Right cardiac atrium (tissue), 5 donors: ENCODE measurements at regions of chr5 and their contacts with region 1.

Region 1: GRCh38 chr5:141557681-141558136 is 61.1 kb downstream of the DIAPH1 start:
- DNase-seq: peak; percentile 85 to 92 (median 90)
- ATAC-seq: peak; percentile 88 to 91
- H3K4me3 ChIP-seq: peak overlapping the region; percentile 30
- H3K27ac ChIP-seq: peak overlapping the region; percentile 86
- H3K4me1 ChIP-seq: peaks cover 4% of the 10 kb centered on the region
- H3K27me3 ChIP-seq: no peaks in the 10 kb centered on the region

Region 2: DNA sequence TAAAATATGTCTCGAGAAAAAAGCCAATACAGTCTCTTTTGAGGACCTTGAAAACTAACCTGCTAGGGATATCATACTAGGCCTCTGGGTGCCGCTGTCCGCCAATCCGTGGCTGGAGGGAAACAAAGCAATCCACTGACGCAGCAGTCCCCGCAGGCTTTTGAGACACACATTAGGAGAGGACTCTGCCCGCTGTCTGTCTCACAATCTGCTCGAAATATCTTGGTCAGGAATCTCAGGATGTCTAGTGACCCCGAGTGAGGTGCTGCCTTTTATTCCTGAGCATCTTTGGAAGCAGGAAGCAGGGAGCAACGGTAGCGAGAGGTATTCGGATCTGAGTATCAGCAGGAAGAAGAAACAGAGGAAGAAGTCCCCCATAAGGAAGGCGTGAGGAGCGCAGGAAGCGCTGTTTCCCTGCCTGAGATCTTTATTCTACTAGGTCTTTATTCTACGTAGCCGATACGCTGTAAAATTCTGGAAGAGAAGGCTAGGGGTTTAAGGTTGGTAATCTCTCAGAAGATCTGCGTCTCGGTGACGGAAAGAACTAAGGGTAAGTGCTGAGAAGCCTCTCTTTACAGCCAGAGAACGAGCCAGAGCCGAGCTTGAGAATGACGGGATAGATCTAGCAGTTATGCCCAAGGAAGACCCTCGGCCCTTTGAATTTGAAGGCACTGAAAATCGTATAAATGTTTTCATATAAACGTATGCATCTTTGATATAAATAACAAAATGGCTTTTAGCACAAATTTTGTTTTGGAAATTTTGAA is 231.4 kb before region 1 on chr5:
- intact Hi-C with region 1: loop called in 2 of 4 experiments (anchors 5 to 10 kb)
- DNase-seq: peak; percentile 59 to 83 (median 77)
- ATAC-seq: peak; percentile 77 to 93
- H3K4me3 ChIP-seq: peak overlapping the region; percentile 46
- H3K27ac ChIP-seq: peak overlapping the region; percentile 55
- H3K4me1 ChIP-seq: no peaks in the 10 kb centered on the region
- H3K27me3 ChIP-seq: no peaks in the 10 kb centered on the region

Region 3: DNA sequence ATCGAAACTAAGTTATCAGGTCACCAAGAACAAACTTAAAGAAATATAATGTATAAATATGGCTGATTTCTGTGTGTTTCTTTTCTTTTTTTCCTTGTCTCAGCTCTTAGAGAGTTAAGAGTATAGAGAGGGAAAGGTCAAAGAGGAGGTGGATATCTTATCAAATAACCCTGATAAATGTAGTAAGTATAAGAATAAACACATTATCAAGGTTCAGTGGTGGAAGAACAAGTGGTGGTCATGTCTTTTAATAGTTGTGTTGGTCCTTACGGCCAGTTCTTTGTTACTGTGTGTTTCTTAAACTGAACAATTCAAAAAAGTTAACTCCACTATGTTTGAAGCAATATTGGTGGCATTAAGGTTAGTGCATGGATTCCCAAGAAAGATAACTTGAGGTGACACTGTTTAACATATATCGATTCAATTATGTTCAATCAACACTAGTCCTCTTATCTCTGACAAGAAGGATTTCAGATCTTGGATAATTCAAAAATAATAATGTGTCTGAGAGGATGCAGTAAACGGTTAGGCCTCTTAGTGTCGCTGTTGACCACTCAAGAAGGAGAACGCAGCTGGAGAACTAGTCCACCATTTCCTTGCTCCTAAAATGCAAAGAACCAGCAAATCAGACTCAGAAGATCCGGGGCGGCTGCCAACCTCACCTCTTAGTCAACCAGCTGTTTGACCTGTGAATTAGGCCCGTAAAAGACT is 214.3 kb before region 1 on chr5 and contains the start of gene PCDHGA3:
- intact Hi-C with region 1: loop called in 3 of 4 experiments (anchors 5 to 10 kb)
- DNase-seq: no peak
- ATAC-seq: peak; percentile 40 to 47
- H3K4me3 ChIP-seq: peak within 1 kb of the TSS; percentile 42
- H3K27ac ChIP-seq: no peak within 1 kb of the TSS
- H3K4me1 ChIP-seq: no peaks in the 10 kb centered on the region
- H3K27me3 ChIP-seq: no peaks in the 10 kb centered on the region
- total RNA-seq, gene PCDHGA3: 4.9 to 7.7 (median 5.6) TPM

Region 4: DNA sequence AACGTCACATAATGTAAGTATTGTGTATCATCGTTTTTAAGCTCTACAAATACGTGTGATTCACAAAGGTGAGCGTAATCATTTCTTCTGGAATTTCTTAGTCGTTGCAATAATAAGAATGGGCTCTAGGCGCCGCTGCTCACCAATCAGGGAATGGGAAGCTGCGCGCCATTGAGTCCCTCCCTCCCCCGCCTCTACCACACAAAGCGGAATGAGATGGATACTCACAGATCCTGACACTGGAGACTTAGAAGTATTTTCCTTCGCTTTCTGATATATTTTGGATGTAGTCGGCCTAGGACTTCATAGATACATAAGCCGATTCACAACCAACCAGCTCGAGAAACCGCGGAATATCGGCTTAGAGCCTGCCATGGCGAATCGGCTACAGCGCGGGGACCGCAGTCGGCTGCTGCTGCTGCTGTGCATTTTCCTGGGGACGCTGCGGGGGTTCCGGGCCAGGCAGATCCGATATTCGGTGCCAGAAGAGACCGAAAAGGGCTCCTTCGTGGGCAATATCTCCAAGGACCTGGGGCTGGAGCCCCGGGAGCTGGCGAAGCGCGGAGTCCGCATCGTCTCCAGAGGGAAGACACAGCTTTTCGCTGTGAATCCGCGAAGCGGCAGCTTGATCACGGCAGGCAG is 136.7 kb before region 1 on chr5 and contains the start of gene PCDHGA11:
- intact Hi-C with region 1: loop called in 2 of 4 experiments (anchors 5 kb)
- DNase-seq: peak in 1 of 3 donors; percentile 56
- ATAC-seq: peak in 1 of 2 donors; percentile 39
- H3K4me3 ChIP-seq: peak within 1 kb of the TSS; percentile 49
- H3K27ac ChIP-seq: no peak within 1 kb of the TSS
- H3K4me1 ChIP-seq: peaks cover 2% of the 10 kb centered on the region
- H3K27me3 ChIP-seq: no peaks in the 10 kb centered on the region
- total RNA-seq, gene PCDHGA11: 3.1 to 4.2 (median 3.6) TPM

Region 5: GRCh38 chr5:141430332-141431113 is 127.2 kb before region 1 on chr5 and contains the start of gene PCDHGA12:
- intact Hi-C with region 1: loop called in 1 of 4 experiments (anchors 5 kb)
- DNase-seq: peak; percentile 66 to 81 (median 75)
- ATAC-seq: peak; percentile 86 to 89
- H3K4me3 ChIP-seq: peak within 1 kb of the TSS; percentile 1
- H3K27ac ChIP-seq: no peak within 1 kb of the TSS
- H3K4me1 ChIP-seq: no peaks in the 10 kb centered on the region
- H3K27me3 ChIP-seq: no peaks in the 10 kb centered on the region
- total RNA-seq, gene PCDHGA12: 4.8 to 7.1 (median 5.6) TPM

Region 6: GRCh38 chr5:141618804-141619554 is 61.3 kb after region 1 on chr5 and contains the start of gene DIAPH1:
- intact Hi-C with region 1: no loop called
- DNase-seq: peak; percentile 98 to 99 (median 98)
- ATAC-seq: peak; percentile 97
- H3K4me3 ChIP-seq: peak within 1 kb of the TSS; percentile 75
- H3K27ac ChIP-seq: peak within 1 kb of the TSS; percentile 69
- H3K4me1 ChIP-seq: no peaks in the 10 kb centered on the region
- H3K27me3 ChIP-seq: no peaks in the 10 kb centered on the region
- total RNA-seq, gene DIAPH1: 15.8 to 53.0 (median 19.2) TPM